Activated CD8-positive, alpha-beta memory T cell treated with anti-CD3 and anti-CD28 coated beads, Interleukin-2, amount 10 ng/mL, durations not matched to agents 7 days and 5 days (primary cell): ENCODE measurements at regions of chr3 and their contacts with region 1.

Region 1: DNA sequence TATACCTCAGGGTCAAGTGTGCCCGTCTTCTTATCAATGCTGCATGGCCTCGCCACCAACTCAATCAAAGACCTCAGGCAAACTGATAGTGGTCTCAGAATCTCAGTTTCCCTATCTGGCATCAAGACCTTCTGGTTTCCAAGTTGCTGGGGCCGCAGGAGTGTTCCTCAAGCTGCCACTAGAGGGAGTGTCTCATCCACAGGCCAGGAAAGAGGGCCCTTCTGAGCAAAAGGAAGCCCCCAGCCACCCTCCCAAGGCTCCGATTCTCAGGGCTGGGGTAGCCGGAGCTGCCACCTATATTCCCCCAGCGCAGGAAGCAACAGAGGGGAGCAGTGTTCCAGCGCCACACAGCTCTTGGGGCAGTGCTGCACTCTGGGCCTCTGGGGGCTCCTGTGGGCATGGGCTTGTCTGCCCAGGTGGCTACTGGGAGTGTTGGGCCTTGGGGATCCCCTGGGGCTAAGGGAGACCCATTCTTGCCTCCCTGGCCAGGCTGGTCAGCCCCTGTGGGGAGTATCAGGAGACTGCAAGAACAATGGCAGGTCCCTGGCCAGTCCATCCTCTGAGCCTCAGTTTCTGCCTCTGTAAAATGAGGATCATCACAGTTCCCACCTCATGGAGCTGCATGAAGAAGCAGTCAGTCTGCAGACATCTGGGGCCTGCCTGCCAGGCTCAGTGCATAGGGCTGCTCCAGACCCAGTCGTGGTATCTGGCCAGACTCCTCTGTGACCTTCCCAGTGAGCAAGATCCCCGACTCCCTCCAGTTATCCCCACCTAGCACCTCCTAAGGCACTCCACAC is 23.4 kb upstream of the SEC13 start:
- DNase-seq: peak; percentile 60
- ATAC-seq: peak; percentile 58
- H3K4me3 Mint-ChIP-seq: no peak overlapping the region
- H3K27ac Mint-ChIP-seq: no peak overlapping the region
- H3K4me1 Mint-ChIP-seq: no peaks in the 10 kb centered on the region
- H3K27me3 Mint-ChIP-seq: peaks cover 3% of the 10 kb centered on the region

Region 2: DNA sequence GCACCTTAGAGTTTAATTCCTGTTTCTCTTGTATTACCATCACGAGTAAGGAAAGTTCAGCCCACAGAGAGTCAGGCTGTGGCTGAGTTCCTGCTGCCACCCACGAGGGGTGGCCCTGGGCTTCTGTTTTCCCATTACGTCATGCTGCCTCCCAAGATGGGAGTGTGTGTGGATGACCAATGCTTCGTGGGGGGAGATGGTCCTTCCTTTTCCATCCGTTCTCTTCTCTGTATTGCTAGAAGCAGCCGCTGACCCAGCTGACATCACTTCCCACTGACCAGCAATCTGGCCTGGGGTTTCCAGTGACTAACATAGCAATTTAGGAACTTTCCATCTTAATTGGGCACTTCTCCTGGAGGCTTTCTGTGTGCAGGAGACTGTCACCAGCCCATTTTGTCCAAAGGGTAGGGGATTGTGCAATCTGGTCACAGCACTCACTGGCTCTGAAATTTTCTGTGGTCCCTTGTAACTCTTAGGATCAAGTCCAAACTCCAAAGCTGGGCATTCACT is 170.4 kb before region 1 on chr3:
- CTCF ChIA-PET with region 1: no interaction called
- DNase-seq: no peak
- ATAC-seq: no peak
- H3K4me3 Mint-ChIP-seq: no peak overlapping the region
- H3K27ac Mint-ChIP-seq: no peak overlapping the region
- H3K4me1 Mint-ChIP-seq: peaks cover 7% of the 10 kb centered on the region
- H3K27me3 Mint-ChIP-seq: no peaks in the 10 kb centered on the region

Region 3: GRCh38 chr3:10371789-10372188 is 27.4 kb after region 1 on chr3:
- CTCF ChIA-PET with region 1: no interaction called
- DNase-seq: no peak
- ATAC-seq: no peak
- H3K4me3 Mint-ChIP-seq: no peak overlapping the region
- H3K27ac Mint-ChIP-seq: no peak overlapping the region
- H3K4me1 Mint-ChIP-seq: peaks cover 4% of the 10 kb centered on the region
- H3K27me3 Mint-ChIP-seq: peaks cover 8% of the 10 kb centered on the region

Region 4: GRCh38 chr3:10738688-10739372 is 394.5 kb after region 1 on chr3:
- CTCF ChIA-PET with region 1: interaction called, 26 read pairs
- DNase-seq: peak; percentile 74
- ATAC-seq: peak; percentile 79
- H3K4me3 Mint-ChIP-seq: no peak overlapping the region
- H3K27ac Mint-ChIP-seq: no peak overlapping the region
- H3K4me1 Mint-ChIP-seq: no peaks in the 10 kb centered on the region
- H3K27me3 Mint-ChIP-seq: peaks cover 21% of the 10 kb centered on the region